ENCODE measurements at regions of chr14 and their contacts with region 1.

Region 1: GRCh38 chr14:30621940-30622830 is at the start of gene SCFD1:
- DNase-seq: peak; percentile 83
- ATAC-seq: peak; percentile 98
- H3K4me3 ChIP-seq: peak within 1 kb of the TSS; percentile 90
- H3K27ac ChIP-seq: peak within 1 kb of the TSS; percentile 94
- H3K4me1 ChIP-seq: peaks cover 3% of the 10 kb centered on the region
- H3K27me3 ChIP-seq: no peaks in the 10 kb centered on the region
- CTCF ChIP-seq: no peak
- POLR2A ChIP-seq: peak; percentile 94
- RAD21 ChIP-seq: no peak
- total RNA-seq, gene SCFD1: 74.0 and 143 TPM in 2 replicates

Region 2: GRCh38 chr14:30559638-30560091 is 62.5 kb before region 1 on chr14:
- CTCF ChIA-PET with region 1: no interaction called
- POLR2A ChIA-PET with region 1: no interaction called
- dilution Hi-C with region 1: no loop called
- in situ Hi-C with region 1: no loop called
- intact Hi-C with region 1: loop called (anchors 5 kb)
- DNase-seq: peak; percentile 42
- ATAC-seq: peak; percentile 21
- H3K4me3 ChIP-seq: peak overlapping the region; percentile 93
- H3K27ac ChIP-seq: peak overlapping the region; percentile 82
- H3K4me1 ChIP-seq: peaks cover 2% of the 10 kb centered on the region; the same call in 1 of the 2 replicates
- H3K27me3 ChIP-seq: no peaks in the 10 kb centered on the region
- CTCF ChIP-seq: no peak
- POLR2A ChIP-seq: no peak
- RAD21 ChIP-seq: no peak

Region 3: GRCh38 chr14:30580616-30581282 is 41.4 kb before region 1 on chr14:
- CTCF ChIA-PET with region 1: no interaction called
- POLR2A ChIA-PET with region 1: no interaction called
- dilution Hi-C with region 1: no loop called
- in situ Hi-C with region 1: no loop called
- intact Hi-C with region 1: loop called (anchors 5 kb)
- DNase-seq: peak; percentile 27
- ATAC-seq: no peak
- H3K4me3 ChIP-seq: no peak overlapping the region
- H3K27ac ChIP-seq: no peak overlapping the region
- H3K4me1 ChIP-seq: peaks cover 7% of the 10 kb centered on the region
- H3K27me3 ChIP-seq: no peaks in the 10 kb centered on the region
- CTCF ChIP-seq: no peak
- POLR2A ChIP-seq: no peak
- RAD21 ChIP-seq: no peak

Measured in IMR-90 (cell line).